Uterus (tissue), 4 donors: ENCODE measurements at regions of chr13 and their contacts with region 1.

Region 1: GRCh38 chr13:45199711-45200110 is 1.1 kb downstream of the KCTD4 start:
- DNase-seq: no peak
- H3K4me3 ChIP-seq: no peak overlapping the region
- H3K27ac ChIP-seq: no peak overlapping the region
- H3K4me1 ChIP-seq: no peaks in the 10 kb centered on the region
- H3K27me3 ChIP-seq: no peaks in the 10 kb centered on the region
- CTCF ChIP-seq: no peak
- POLR2A ChIP-seq: no peak

Region 2: DNA sequence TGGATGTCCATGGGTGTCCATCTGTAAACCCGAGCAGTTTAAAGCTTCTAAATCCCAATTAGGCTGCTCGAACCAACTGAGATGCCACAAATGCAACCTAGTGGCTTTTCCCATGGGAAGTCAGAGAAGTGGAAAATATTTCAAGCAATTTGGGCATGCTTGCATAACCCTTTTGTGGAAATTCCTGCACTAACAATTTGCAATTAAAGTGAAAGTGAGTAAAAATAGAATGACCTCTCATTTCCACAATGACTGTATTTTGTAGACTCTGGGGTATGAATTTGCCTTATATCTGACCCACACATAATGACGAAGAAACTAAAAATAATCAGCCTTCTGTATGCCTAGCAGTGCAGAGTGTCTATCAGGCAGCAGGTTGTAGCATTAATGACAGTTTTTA is 531.8 kb before region 1 on chr13:
- intact Hi-C with region 1: no loop called
- DNase-seq: no peak
- H3K4me3 ChIP-seq: no peak overlapping the region
- H3K27ac ChIP-seq: no peak overlapping the region
- H3K4me1 ChIP-seq: no peaks in the 10 kb centered on the region
- H3K27me3 ChIP-seq: no peaks in the 10 kb centered on the region
- CTCF ChIP-seq: no peak
- POLR2A ChIP-seq: no peak

Region 3: DNA sequence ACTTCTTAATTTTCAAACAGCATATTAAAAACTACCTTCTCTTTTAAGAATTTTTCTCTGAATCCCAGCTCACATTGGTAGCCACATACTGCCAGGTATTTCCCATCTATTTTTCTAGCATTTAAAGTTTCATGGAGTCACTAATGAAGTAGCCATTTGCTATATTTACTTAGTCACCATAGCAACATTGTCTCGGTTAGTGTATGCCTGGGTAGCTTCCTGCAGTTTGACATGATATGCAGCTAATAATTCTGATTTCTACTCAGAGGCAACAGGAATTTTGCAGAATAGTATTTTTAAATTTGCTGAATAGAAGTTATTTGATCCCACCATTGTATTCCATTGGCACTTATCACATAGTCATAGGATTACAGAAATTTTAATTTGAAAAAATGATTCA is 32.0 kb after region 1 on chr13:
- intact Hi-C with region 1: loop called (anchors 2 kb)
- DNase-seq: no peak
- H3K4me3 ChIP-seq: no peak overlapping the region
- H3K27ac ChIP-seq: no peak overlapping the region
- H3K4me1 ChIP-seq: no peaks in the 10 kb centered on the region
- H3K27me3 ChIP-seq: no peaks in the 10 kb centered on the region
- CTCF ChIP-seq: no peak
- POLR2A ChIP-seq: no peak